GM13976 (cell line): ENCODE measurements at regions of chr6 and their contacts with region 1.

Region 1: DNA sequence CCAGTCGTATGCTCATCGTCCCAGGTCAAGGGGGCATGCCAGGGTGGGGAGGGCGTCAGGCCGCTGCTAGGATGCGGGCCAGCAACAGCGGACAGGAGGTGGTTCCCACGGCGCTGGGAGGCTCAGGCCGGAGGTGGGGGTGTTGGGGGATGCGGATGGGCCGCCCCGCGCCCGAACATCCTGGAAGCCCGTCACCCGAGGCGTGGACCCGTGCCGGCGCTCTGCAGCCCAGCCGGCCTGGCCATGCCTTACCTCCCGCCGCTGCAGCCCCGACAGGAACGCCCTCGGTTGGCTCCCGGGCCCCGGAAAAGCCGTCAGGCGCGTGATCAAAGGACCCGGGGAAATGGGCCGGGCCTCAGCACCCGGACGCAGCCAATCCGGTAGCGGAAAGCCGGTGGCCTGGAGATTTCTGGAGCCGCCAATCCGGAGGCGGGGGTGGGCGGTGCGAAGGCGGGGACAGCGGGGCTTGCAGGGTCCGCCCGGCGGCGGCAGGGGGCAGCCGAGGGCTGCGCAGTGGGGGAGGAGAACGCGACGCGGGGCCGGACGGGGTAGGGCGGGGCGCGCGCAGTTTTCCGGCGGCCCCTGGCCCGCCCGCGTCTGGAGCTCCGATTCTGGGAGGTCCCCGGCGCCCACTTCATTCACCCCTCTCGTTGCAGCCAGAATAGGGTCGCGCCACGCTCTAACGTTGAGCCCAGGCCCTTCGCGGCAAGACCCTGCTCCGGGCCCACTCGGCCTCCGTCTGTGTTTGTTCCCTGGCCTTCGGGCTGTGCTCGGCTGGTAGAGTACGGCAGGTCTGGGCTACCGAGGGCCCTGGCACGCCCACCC is at the start of gene SMIM29:
- DNase-seq: peak; percentile 97
- CTCF ChIP-seq: peak; percentile 88

Region 2: GRCh38 chr6:34196126-34196830 is 52.7 kb before region 1 on chr6:
- in situ Hi-C with region 1: loop called (anchors 10 kb)
- DNase-seq: peak; percentile 95
- CTCF ChIP-seq: peak; percentile 98